Mammary epithelial cell (primary cell): ENCODE measurements at regions of chr2 and their contacts with region 1.

Region 1: DNA sequence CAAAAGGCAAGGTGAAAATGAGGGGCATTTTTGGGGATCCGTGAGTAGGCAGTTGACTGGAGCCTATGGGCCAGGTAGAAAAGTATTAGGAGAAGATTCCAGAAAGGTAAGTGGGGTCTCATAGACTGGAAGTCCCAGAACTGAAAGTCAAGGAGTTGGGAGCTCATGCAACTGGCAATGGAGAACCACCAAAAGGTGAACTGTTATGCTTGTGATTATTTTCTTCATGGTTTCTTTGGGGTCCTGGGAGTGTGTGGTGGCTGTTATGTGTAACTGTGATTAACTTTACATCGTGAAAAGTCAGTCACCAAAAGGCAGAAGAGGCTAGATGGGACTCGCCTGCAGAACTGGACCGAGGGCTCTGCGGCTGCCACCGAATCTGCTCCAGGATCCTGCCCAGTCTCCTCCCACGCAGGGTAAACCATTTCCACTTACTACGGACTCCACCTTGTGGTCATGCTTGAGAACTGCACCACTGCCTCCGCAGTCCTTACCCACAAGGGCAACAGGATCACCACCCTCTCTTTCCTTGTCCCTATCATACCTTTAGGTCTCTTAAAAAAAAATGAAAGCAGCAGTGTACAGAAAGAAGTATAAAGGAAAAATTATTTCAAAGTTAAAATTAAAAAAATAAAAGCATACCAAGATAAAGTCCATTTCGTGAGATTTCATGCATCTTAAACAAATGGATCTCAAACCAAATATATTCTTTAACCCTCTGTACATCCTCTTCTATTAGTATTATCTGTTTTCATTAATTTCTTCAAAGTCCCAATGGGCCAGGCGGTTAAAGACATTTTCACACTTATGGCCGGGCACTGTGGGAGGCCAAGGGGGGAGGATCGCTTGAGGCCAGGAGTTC is 15.6 kb upstream of the CEP68 start:
- DNase-seq: peak; percentile 67
- H3K4me3 ChIP-seq: no peak overlapping the region
- H3K27ac ChIP-seq: no peak overlapping the region
- H3K4me1 ChIP-seq: no peaks in the 10 kb centered on the region
- H3K27me3 ChIP-seq: no peaks in the 10 kb centered on the region
- CTCF ChIP-seq: peak; percentile 96 to 98

Region 2: DNA sequence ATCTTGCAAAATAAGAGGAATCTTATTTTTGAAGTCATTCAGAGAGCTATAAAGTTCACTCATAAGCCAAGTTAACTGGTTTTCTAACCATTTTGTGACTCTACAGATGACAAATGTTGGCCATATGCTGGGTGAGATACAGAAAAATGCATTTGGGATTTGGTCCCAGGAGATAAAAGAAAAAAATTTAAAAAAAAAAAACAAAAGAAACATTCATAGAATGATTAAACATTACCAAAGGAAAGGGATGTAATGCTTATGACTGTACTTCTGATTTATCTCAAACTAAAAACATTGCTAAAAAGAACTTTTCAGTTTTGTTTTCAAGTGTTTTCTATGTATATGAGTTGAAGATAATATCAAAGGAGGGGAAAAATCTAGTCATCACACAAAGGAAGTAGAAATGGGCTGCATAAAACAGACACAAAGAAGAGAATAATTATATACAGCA is 939.5 kb before region 1 on chr2:
- CTCF ChIA-PET with region 1: no interaction called
- dilution Hi-C with region 1: no loop called
- in situ Hi-C with region 1: no loop called
- intact Hi-C with region 1: no loop called
- DNase-seq: no peak
- H3K4me3 ChIP-seq: no peak overlapping the region
- H3K27ac ChIP-seq: no peak overlapping the region
- H3K4me1 ChIP-seq: peaks cover 11% of the 10 kb centered on the region
- H3K27me3 ChIP-seq: no peaks in the 10 kb centered on the region
- CTCF ChIP-seq: no peak

Region 3: GRCh38 chr2:64888591-64889309 is 151.9 kb before region 1 on chr2:
- CTCF ChIA-PET with region 1: interaction called, 17 read pairs
- dilution Hi-C with region 1: no loop called
- in situ Hi-C with region 1: no loop called
- intact Hi-C with region 1: no loop called
- DNase-seq: peak; percentile 80
- H3K4me3 ChIP-seq: no peak overlapping the region
- H3K27ac ChIP-seq: no peak overlapping the region
- H3K4me1 ChIP-seq: no peaks in the 10 kb centered on the region
- H3K27me3 ChIP-seq: no peaks in the 10 kb centered on the region
- CTCF ChIP-seq: peak; percentile 73 to 80

Region 4: DNA sequence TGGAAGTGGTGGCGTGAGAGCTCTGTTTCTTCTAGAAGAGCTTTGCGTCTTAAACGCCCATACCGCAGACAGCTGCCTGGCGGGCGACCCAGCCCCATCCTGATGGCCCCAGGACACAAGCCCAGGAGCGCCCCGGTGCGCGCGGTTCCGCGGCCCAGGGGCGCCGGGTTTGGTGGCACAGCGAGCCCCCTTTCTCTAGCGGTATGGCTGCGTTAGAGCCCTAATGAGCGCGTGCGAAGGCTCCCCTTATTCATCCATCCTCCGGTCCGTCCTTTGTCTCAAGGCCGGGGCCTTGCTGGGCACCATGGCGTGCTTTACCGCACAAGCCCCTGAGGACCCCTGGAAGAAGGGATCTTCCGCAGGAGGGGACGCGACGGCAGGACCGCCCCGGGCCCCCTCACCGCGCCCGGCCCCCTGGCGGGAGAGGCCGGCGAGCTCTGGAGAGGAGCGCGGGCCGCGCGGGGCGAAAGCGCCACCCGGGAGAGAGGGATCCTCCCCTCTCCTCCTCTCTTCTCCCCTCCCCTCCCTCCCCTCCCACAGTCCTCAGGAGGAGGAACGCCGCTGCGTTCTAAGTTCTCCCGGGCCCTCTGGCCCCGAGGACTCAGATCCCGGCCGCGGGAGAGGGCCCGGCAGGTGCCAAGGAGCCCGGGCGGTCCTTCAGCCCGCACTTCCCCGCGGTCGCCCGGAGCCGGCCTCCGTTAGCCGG is 52.1 kb before region 1 on chr2:
- CTCF ChIA-PET with region 1: no interaction called
- dilution Hi-C with region 1: no loop called
- in situ Hi-C with region 1: no loop called
- intact Hi-C with region 1: loop called (anchors 1 kb)
- DNase-seq: peak; percentile 83
- H3K4me3 ChIP-seq: peak overlapping the region; percentile 59 to 69 (median 63)
- H3K27ac ChIP-seq: peak overlapping the region; percentile 40
- H3K4me1 ChIP-seq: peaks cover 19% of the 10 kb centered on the region
- H3K27me3 ChIP-seq: no peaks in the 10 kb centered on the region
- CTCF ChIP-seq: peak; percentile 4 to 47

Region 5: GRCh38 chr2:65576861-65577601 is 536.4 kb after region 1 on chr2:
- CTCF ChIA-PET with region 1: no interaction called
- dilution Hi-C with region 1: no loop called
- in situ Hi-C with region 1: no loop called
- intact Hi-C with region 1: loop called (anchors 2 kb)
- DNase-seq: peak; percentile 92
- H3K4me3 ChIP-seq: no peak overlapping the region
- H3K27ac ChIP-seq: peak overlapping the region; percentile 89
- H3K4me1 ChIP-seq: peaks cover 16% of the 10 kb centered on the region
- H3K27me3 ChIP-seq: no peaks in the 10 kb centered on the region
- CTCF ChIP-seq: no peak